ENCODE measurements at regions of chr6 and their contacts with region 1.

Region 1: DNA sequence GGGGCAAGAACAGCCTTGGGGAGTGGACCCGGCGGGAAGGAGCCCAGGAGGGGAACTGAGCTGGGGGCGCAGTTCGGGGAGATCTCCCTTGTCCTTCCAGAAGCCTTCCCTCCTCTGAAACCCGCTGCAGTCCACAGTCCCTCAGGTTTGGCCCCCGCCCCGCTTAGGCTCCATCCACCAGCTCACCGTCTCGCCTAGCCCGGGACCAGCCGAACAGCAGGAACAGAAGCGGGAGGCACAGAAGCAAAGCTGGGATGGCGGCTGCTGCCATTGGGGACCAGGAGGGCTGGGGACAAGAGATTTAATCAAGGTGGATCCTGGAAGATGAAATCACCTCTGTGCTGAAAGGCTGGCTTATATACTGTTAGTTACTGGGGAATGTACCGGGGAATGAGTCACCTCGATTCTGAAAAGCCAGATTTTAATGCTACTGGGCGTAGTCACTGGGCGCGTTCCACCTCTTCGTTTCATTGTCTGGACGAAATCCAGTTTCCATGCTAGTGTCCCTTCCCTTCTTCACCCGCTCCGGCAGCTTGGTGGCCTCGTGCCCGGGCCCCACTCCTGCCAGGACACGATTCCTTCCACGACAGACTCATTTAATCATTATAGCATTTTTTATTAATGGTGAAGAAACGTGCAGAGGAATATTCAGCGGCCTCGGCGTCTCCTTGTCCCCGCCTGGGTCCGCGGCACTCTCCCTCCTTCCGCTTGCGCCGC is at the start of gene RAET1L:
- DNase-seq: peak; percentile 85
- H3K4me3 Mint-ChIP-seq: peak within 1 kb of the TSS; percentile 76
- H3K27ac Mint-ChIP-seq: peak within 1 kb of the TSS; percentile 74
- H3K4me1 Mint-ChIP-seq: peaks cover 23% of the 10 kb centered on the region
- H3K27me3 Mint-ChIP-seq: no peaks in the 10 kb centered on the region
- CTCF ChIP-seq: no peak
- total RNA-seq, gene RAET1L: 1.2 TPM in 2 replicates

Region 2: GRCh38 chr6:150068720-150069648 is 43.6 kb after region 1 on chr6 and contains the start of gene ULBP3:
- CTCF ChIA-PET with region 1: no interaction called
- POLR2A ChIA-PET with region 1: interaction called, 3 read pairs
- intact Hi-C with region 1: loop called (anchors 5 kb)
- DNase-seq: peak; percentile 98
- H3K4me3 Mint-ChIP-seq: peak within 1 kb of the TSS; percentile 77
- H3K27ac Mint-ChIP-seq: no peak within 1 kb of the TSS
- H3K4me1 Mint-ChIP-seq: peaks cover 28% of the 10 kb centered on the region
- H3K27me3 Mint-ChIP-seq: no peaks in the 10 kb centered on the region
- CTCF ChIP-seq: peak; percentile 34
- total RNA-seq, gene ULBP3: 4.9 and 6.3 TPM in 2 replicates